Mammary epithelial cell (primary cell): ENCODE measurements at regions of chr7 and their contacts with region 1.

Region 1: GRCh38 chr7:128335734-128336133 is 8.0 kb downstream of the RBM28 start:
- DNase-seq: no peak
- H3K4me3 ChIP-seq: no peak overlapping the region
- H3K27ac ChIP-seq: no peak overlapping the region
- H3K4me1 ChIP-seq: no peaks in the 10 kb centered on the region
- H3K27me3 ChIP-seq: no peaks in the 10 kb centered on the region
- CTCF ChIP-seq: no peak

Region 2: DNA sequence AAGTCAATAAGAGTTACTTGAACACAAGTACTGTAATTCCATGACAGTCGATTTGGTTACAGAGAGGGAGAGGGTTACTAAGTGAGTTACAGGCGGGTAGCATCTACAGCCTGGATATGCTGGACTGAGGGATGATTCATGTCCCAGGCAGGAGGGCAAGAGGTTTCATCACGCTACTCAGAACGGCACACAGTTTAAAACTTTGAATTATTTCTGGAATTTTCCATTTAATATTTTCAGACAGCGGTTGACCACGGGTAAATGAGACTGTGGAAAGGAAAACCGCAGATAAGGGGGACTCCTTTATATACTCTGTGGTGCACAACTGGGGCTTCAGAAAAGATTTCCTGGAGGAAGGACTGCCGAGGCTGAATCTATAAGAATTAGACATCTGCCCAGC is 278.8 kb before region 1 on chr7:
- CTCF ChIA-PET with region 1: no interaction called
- dilution Hi-C with region 1: no loop called
- in situ Hi-C with region 1: no loop called
- intact Hi-C with region 1: no loop called
- DNase-seq: no peak
- H3K4me3 ChIP-seq: no peak overlapping the region
- H3K27ac ChIP-seq: no peak overlapping the region
- H3K4me1 ChIP-seq: peaks cover 5% of the 10 kb centered on the region
- H3K27me3 ChIP-seq: no peaks in the 10 kb centered on the region
- CTCF ChIP-seq: no peak

Region 3: DNA sequence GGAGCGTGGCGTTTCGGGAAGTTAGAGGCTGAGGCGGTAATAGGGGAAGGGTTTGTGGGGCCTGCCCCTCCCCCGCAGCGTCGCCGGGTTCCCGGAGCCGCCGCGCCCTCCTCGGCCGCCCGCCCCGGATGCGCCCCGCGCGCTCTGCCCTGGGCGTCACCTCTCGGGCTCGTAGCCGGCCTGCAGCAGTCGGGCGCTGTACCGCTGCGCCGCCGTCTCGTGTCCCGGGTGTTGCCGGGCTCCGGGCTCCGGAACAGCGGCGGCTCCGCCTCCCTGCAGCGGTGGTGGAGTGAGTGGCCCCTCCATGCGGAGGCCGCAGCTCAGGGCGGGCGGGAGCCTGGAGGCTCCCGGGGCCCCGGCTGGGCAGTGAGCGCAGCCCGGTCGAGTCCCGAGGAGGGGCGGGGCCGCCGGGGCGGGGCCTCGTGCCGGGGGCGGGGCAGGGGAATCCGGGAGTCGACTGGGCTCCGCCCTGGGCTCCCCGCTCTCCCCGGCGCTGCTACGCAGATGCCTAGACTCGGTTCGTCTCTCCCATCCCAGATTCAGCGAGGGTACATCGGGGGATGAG is 73.9 kb after region 1 on chr7 and contains the start of gene IMPDH1:
- CTCF ChIA-PET with region 1: no interaction called
- dilution Hi-C with region 1: loop called (anchors 10 kb)
- in situ Hi-C with region 1: no loop called
- intact Hi-C with region 1: no loop called
- DNase-seq: peak; percentile 80
- H3K4me3 ChIP-seq: peak within 1 kb of the TSS; percentile 67 to 77 (median 68)
- H3K27ac ChIP-seq: peak within 1 kb of the TSS; percentile 35
- H3K4me1 ChIP-seq: peaks cover 22% of the 10 kb centered on the region
- H3K27me3 ChIP-seq: no peaks in the 10 kb centered on the region
- CTCF ChIP-seq: no peak
- total RNA-seq, gene IMPDH1: 50.5 to 92.3 TPM

Region 4: DNA sequence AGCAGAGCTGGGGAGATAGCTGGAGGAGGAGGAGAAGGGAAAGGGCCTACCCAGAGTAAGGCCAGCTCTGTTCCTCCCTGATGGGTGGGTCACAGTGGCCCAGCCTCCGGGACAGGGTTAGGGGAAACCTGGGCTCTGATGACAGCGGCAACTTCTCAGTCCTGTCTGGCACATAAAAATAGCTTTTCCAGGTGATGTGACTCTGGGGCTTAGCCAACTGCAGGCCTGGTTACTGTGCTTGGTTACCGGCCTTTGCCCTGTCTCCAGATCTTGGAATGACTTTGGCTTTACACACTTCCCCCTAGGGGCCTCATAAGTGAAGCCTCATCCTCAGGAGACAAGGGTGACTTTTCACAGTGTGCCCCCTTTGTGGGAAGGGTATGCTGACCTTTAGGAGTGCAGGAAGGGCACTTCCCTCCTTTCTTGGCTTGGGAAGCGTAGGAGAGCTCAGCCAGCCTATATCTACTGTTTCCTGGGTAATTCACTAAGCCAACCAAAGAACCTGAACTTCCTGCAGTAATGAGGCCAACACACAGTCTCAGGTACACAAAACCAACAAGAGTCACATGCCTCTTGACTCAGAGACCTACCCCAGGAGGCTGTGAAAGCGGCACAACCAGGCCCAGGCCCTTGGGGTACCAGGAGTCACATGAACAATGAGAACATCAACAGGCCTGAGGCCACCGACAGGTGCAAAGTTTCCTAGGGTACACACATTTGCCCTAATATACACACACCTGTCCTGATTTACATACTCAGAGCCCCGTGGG is 108.3 kb after region 1 on chr7:
- CTCF ChIA-PET with region 1: no interaction called
- dilution Hi-C with region 1: no loop called
- in situ Hi-C with region 1: no loop called
- intact Hi-C with region 1: no loop called
- DNase-seq: peak; percentile 19
- H3K4me3 ChIP-seq: no peak overlapping the region
- H3K27ac ChIP-seq: no peak overlapping the region
- H3K4me1 ChIP-seq: no peaks in the 10 kb centered on the region
- H3K27me3 ChIP-seq: no peaks in the 10 kb centered on the region
- CTCF ChIP-seq: no peak